ENCODE measurements at regions of chr14 and their contacts with region 1.

Region 1: DNA sequence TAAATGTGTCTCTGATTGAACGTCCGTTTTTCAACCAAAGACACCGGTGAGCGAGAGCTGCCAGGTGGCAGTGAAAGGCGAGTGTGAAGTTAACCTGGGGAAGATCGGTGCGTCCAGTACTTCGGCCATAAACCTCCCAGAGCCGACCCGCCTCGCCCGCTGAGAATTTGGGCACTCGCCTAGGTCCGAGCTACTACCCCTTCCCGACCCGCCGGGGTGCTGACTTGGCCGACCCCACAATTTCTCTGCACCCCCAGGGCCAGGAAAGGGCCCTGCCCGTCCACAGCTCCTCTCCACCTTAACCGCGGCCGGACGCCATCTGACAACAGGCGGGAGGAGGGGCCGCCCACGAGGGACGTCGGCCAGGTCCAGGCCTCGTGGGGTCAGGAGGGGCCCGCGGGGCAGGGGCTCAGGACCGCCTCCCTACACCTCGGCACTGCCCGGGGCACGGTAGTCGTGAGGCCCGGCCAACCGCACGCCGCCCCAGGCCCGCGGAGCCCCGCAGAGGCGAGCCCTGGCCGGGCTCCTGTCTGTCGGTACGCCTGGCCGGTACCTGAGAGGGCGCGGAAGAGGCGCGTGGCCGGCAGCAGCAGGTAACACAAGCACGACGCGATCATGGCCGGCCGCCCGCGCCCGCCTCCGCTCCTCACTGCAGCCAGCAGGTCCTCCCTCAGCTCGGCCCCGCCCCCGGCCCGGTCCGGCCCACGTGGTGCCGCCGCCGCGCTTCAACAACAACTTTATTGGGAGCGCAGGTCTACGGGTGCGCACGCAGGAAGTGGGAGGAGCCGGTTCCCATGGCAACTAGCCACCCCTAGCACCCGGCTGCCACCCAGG is at the start of gene ANGEL1:
- DNase-seq: peak; percentile 79
- ATAC-seq: peak; percentile 96
- H3K4me3 ChIP-seq: peak within 1 kb of the TSS; percentile 96
- H3K27ac ChIP-seq: peak within 1 kb of the TSS; percentile 23
- H3K4me1 ChIP-seq: no peaks in the 10 kb centered on the region
- H3K27me3 ChIP-seq: peaks cover 0 to 2% of the 10 kb centered on the region in 2 experiments; a peak in 1 of 4 replicates
- CTCF ChIP-seq: no peak
- EP300 ChIP-seq: no peak
- POLR2A ChIP-seq: peak; percentile 96
- RAD21 ChIP-seq: no peak
- polyA plus RNA-seq, gene ANGEL1: 1.7 to 2.8 TPM

Region 2: GRCh38 chr14:75310295-75311111 is 1501.9 kb before region 1 on chr14:
- CTCF ChIA-PET with region 1: no interaction called
- POLR2A ChIA-PET with region 1: no interaction called
- RAD21 ChIA-PET with region 1: no interaction called
- SMC1A ChIA-PET with region 1: no interaction called
- in situ Hi-C with region 1: no loop called
- intact Hi-C with region 1: no loop called
- DNase-seq: no peak
- ATAC-seq: no peak
- H3K4me3 ChIP-seq: no peak overlapping the region
- H3K27ac ChIP-seq: no peak overlapping the region
- H3K4me1 ChIP-seq: peaks cover 8% of the 10 kb centered on the region
- H3K27me3 ChIP-seq: no peaks in the 10 kb centered on the region
- CTCF ChIP-seq: no peak
- EP300 ChIP-seq: no peak
- POLR2A ChIP-seq: no peak
- RAD21 ChIP-seq: no peak

Region 3: DNA sequence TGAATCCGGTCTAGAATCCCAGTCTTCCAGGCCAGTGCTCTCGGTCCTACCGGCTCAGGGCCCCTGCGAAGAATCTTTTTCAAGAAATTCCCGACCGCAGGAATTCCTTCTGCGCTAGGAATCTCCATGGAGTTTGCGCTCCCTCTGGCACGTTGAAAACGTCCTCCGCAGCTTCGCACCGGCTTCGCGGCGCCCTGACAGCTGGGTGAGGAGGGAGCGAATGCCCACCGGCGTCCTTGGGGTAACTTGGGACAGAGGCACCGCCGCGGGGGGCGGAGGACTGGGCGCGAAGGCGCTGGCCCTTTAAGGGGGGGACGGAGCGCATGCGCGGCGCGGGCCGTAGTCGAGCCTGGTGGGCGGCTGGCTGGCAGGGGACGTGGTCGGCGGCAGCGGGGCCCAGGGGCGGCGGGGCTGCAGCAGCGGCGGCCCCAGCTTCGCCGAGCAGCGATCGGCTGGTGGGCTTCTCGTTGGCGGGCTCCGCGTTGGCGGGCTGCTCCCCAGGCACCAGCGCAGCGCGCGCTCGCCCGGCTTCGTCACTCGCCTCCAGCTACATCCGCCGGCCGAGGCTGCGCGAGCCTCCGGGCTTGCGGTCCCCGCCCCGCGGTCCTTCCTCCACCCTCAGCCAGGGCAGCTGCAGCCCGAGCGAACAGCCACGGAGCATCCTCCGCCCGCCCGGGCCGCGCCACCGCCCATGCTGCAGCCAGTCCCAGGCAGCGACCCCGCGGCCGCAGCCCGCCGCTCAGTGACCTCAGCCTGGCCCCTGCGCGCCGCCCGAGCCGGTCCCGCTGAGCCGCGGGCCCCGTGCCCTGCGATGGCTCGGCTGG is 51.1 kb before region 1 on chr14 and contains the start of gene VASH1:
- CTCF ChIA-PET with region 1: interaction called, 4 read pairs
- POLR2A ChIA-PET with region 1: no interaction called
- RAD21 ChIA-PET with region 1: no interaction called
- SMC1A ChIA-PET with region 1: interaction called, 4 read pairs
- in situ Hi-C with region 1: no loop called
- intact Hi-C with region 1: loop called (anchors 5 kb)
- DNase-seq: no peak
- ATAC-seq: peak; percentile 95
- H3K4me3 ChIP-seq: peak within 1 kb of the TSS; percentile 71
- H3K27ac ChIP-seq: no peak within 1 kb of the TSS
- H3K4me1 ChIP-seq: no peaks in the 10 kb centered on the region; the same call in 1 of the 2 replicates
- H3K27me3 ChIP-seq: peaks cover 2 to 7% of the 10 kb centered on the region in 2 experiments
- CTCF ChIP-seq: no peak
- EP300 ChIP-seq: no peak
- POLR2A ChIP-seq: peak; percentile 35; the same call in 1 of the 2 replicates
- RAD21 ChIP-seq: no peak
- polyA plus RNA-seq, gene VASH1: 0.06 to 0.35 TPM

Region 4: DNA sequence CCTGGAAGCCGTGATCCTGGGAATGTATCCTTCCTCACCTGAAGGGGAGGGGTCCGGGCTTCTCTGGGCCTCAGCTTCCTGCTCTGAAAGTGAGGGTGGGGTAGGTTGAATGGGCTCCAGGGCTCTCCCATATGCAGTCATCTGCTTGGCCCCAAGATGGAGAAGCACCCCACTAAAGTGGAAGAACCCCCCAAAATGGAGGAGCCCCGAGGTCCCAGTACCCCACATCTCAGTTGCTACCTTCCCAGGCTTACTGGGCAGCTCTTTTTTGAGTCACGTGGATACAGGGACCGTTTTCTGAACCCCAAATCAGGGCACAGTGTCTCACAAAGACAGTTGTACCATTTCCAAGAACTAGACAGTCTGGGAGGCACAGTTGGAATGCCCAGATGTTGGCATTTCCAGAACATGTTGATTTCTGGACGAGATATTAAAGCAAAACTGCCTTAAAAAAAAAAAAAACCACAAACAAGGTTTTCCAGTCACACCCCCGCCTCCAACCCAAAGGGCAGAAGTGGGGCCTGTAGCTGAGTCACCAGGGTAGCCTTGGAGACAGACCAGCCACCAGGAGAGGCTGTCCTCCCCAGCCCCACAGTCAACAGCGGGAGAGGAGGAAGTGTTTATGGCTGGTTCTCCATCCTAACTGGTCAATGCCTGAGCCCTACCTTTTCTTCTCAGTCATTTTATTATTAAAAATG is 39.1 kb before region 1 on chr14:
- CTCF ChIA-PET with region 1: interaction called, 11 read pairs
- POLR2A ChIA-PET with region 1: no interaction called
- RAD21 ChIA-PET with region 1: no interaction called
- SMC1A ChIA-PET with region 1: no interaction called
- in situ Hi-C with region 1: no loop called
- intact Hi-C with region 1: no loop called
- DNase-seq: no peak
- ATAC-seq: peak; percentile 49
- H3K4me3 ChIP-seq: no peak overlapping the region
- H3K27ac ChIP-seq: no peak overlapping the region
- H3K4me1 ChIP-seq: peaks cover 6% of the 10 kb centered on the region
- H3K27me3 ChIP-seq: no peaks in the 10 kb centered on the region
- CTCF ChIP-seq: no peak
- EP300 ChIP-seq: no peak
- POLR2A ChIP-seq: no peak
- RAD21 ChIP-seq: no peak

Region 5: DNA sequence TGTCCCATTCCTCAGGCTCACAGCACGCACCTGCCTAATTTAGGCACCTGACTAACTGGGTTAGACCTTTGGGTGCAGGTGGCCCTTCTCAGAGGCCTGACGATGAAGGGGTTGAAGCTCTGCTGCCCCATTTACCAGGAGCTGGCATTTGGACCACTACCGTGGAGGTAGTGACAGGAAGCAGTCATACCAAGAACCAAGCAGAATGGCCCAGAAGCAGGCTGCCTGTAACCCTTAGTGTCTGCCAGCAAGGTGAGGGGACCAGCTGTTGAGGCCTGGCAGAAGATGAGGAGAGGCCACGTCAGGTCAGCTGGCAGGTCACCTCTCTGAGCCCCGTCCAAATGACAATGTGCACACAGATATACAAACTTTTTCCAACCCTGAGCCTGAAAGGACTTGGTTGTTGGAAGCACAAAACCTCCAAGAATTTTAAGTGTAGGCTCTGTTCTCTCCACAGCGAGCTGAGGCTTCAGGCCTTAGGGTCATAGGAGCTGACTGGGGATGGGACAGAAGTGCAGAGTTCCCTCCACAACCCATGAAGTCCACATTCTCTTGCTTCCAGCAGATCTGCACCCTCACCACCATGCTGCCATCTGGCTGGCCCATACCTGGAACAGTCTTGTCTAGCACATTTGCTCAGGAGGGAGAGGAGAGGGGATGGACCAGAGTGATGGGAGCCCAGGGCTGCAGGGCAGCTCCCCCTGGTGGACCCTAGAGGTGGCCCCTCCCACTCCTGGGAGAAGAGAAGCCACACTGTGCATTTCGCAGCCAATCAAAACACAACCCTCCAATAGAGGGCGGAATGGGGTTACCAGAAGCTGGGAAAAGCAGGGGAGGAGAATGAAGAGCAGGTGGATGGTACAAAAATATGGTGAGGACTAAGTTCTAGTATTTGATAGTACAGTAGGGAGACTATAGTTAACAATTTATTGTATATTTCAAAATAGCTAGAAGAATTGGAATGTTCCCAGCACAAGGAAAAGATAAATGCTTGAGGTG is 27.9 kb before region 1 on chr14:
- CTCF ChIA-PET with region 1: interaction called, 19 read pairs
- POLR2A ChIA-PET with region 1: no interaction called
- RAD21 ChIA-PET with region 1: interaction called, 4 read pairs
- SMC1A ChIA-PET with region 1: interaction called, 9 read pairs
- in situ Hi-C with region 1: no loop called
- intact Hi-C with region 1: no loop called
- DNase-seq: no peak
- ATAC-seq: peak; percentile 99
- H3K4me3 ChIP-seq: no peak overlapping the region
- H3K27ac ChIP-seq: no peak overlapping the region
- H3K4me1 ChIP-seq: peaks cover 15% of the 10 kb centered on the region
- H3K27me3 ChIP-seq: no peaks in the 10 kb centered on the region
- CTCF ChIP-seq: peak; percentile 58 to 80 (median 75)
- EP300 ChIP-seq: no peak
- POLR2A ChIP-seq: no peak
- RAD21 ChIP-seq: peak; percentile 57

Region 6: GRCh38 chr14:76882651-76883050 is 70.2 kb after region 1 on chr14:
- CTCF ChIA-PET with region 1: no interaction called
- POLR2A ChIA-PET with region 1: no interaction called
- RAD21 ChIA-PET with region 1: no interaction called
- SMC1A ChIA-PET with region 1: no interaction called
- in situ Hi-C with region 1: no loop called
- intact Hi-C with region 1: no loop called
- DNase-seq: no peak
- ATAC-seq: no peak
- H3K4me3 ChIP-seq: no peak overlapping the region
- H3K27ac ChIP-seq: no peak overlapping the region
- H3K4me1 ChIP-seq: no peaks in the 10 kb centered on the region
- H3K27me3 ChIP-seq: peaks cover 2 to 3% of the 10 kb centered on the region in 2 experiments; a peak in 2 of 4 replicates
- CTCF ChIP-seq: no peak
- EP300 ChIP-seq: no peak
- POLR2A ChIP-seq: no peak
- RAD21 ChIP-seq: no peak

Region 7: DNA sequence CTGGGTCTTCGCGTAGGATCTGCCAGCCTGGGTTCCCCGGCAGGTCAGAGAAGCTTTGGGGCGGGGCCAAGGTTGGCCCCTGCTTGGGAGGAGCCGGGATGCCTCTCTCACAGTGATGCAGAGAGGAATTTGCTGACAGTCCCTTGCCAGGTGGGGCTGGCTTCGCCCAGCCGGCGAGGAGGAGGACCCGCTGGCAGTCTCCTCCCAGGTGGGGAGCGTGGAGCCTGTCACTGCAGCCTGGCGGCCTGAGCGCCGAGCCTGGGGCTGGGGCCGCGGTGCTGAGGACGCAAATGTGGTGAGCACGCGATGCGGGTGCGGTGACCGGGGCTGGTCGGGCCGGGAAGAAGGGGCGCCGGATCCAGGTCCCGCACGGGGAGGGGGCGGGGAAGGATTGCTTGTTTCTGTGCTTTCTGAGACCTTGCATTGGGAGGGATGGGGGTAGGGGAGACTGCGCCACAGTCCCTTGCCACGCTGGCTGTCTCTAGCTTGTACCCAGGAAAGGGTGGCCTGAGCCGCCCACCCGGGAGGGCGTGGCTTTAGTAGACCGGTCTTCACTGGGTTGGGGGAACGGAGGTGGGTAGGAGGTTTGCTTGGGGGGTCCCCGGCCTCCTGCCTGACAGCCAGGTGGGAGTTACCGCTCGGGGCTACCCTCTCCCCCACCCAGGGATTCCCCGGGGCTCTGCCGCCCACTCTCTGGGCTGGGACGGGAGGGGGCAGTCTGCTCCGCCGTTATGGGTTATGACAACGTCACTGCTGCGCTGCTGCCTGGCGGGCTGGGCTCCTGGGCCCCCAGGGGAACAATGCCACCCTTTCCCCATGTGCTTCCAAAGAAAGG is 369.4 kb after region 1 on chr14 and contains the start of gene TMEM63C:
- CTCF ChIA-PET with region 1: no interaction called
- POLR2A ChIA-PET with region 1: no interaction called
- RAD21 ChIA-PET with region 1: no interaction called
- SMC1A ChIA-PET with region 1: no interaction called
- in situ Hi-C with region 1: no loop called
- intact Hi-C with region 1: no loop called
- DNase-seq: peak; percentile 21
- ATAC-seq: peak; percentile 94
- H3K4me3 ChIP-seq: peak within 1 kb of the TSS; percentile 53; the same call in 1 of the 2 replicates
- H3K27ac ChIP-seq: no peak within 1 kb of the TSS
- H3K4me1 ChIP-seq: peaks cover 4% of the 10 kb centered on the region
- H3K27me3 ChIP-seq: peaks cover 0 to 3% of the 10 kb centered on the region in 2 experiments; a peak in 1 of 4 replicates
- CTCF ChIP-seq: no peak
- EP300 ChIP-seq: no peak
- POLR2A ChIP-seq: no peak
- RAD21 ChIP-seq: no peak
- polyA plus RNA-seq, gene TMEM63C: not detected

Measured in GM12878 (cell line).